GM12878 (cell line): ENCODE measurements at regions of chr11 and their contacts with region 1.

Region 1: GRCh38 chr11:131889146-131889577 is 518.7 kb downstream of the NTM start:
- DNase-seq: peak; percentile 66
- ATAC-seq: peak; percentile 82
- H3K4me3 ChIP-seq: no peak overlapping the region
- H3K27ac ChIP-seq: no peak overlapping the region
- H3K4me1 ChIP-seq: peaks cover 52% of the 10 kb centered on the region
- H3K27me3 ChIP-seq: no peaks in the 10 kb centered on the region
- CTCF ChIP-seq: no peak
- EP300 ChIP-seq: peak; percentile 21 to 77; a peak in 2 of 4 replicates
- POLR2A ChIP-seq: no peak
- RAD21 ChIP-seq: no peak

Region 2: DNA sequence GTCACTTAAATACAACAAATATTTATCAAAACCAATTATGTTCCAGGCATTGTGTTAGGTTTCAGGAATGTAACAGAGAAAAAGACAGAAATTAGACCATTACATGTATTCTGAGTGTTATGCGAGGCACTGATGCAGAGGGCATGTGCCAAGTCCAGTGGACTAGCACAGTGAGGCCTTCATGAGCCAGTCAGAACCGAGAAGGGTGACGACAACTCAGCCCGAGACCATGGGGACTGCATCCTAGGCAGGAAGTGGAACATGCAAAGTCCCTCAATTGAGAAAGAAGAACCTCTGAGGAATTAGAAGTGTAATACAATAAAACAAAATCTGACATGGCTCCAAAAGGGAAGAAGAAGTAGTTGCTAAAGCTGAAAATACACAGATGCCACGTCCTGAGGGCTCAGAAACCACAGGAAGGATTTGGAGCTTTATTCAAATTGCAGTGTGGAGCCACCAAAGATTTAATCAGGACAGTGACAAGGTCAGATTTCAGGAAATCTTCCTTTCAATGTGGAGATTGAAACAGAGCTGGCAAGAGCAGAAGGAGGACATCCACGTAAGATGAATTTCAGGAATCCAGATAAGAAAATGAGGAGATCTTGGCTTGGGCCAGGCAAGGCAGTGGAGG is 10.9 kb after region 1 on chr11:
- CTCF ChIA-PET with region 1: interaction called, 29 read pairs
- POLR2A ChIA-PET with region 1: interaction called, 5 read pairs
- RAD21 ChIA-PET with region 1: interaction called, 16 read pairs
- SMC1A ChIA-PET with region 1: interaction called, 22 read pairs
- in situ Hi-C with region 1: no loop called
- intact Hi-C with region 1: no loop called
- DNase-seq: no peak
- ATAC-seq: peak; percentile 53; the same call in 2 of the 3 replicates
- H3K4me3 ChIP-seq: no peak overlapping the region
- H3K27ac ChIP-seq: no peak overlapping the region
- H3K4me1 ChIP-seq: peaks cover 7% of the 10 kb centered on the region
- H3K27me3 ChIP-seq: no peaks in the 10 kb centered on the region
- CTCF ChIP-seq: no peak
- EP300 ChIP-seq: no peak
- POLR2A ChIP-seq: no peak
- RAD21 ChIP-seq: no peak

Region 3: DNA sequence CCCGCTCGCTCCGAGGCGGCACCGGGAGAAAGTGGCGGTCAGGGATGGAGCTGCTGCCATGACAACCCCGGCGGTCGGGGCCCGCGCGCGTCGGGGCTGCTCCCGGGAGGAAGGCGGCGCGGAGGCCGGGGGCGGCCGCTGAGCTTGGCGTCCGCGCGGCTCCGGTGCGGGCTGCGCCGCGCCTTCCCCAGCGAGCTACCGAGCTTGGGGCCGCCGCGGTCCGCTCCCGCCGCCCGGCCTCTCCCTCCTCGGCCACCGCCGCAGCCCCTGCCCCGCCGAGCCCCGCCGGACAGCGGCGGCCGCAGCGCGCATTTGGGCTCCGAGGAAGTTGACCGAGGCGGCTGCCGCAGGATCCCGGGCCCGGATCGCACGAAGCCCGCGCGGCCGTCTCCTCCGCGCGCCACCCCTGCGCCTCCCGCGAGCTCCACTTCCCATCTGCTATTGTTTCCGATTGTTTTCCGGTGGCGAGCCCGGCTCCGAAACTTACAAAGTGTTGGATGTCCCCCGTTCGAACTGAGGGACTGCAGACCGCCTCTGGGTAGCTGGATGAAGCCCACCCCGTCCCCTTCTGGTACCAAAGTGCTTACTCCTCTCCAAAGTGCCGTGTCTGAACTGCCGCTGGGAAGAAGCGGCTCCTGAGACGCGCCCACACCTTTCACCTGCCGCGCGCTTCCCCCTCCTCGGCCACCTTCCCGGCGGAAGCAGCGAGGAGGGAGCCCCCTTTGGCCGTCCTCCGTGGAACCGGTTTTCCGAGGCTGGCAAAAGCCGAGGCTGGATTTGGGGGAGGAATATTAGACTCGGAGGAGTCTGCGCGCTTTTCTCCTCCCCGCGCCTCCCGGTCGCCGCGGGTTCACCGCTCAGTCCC is 21.6 kb after region 1 on chr11:
- CTCF ChIA-PET with region 1: interaction called, 11 read pairs
- POLR2A ChIA-PET with region 1: no interaction called
- RAD21 ChIA-PET with region 1: interaction called, 6 read pairs
- SMC1A ChIA-PET with region 1: interaction called, 10 read pairs
- in situ Hi-C with region 1: no loop called
- intact Hi-C with region 1: no loop called
- DNase-seq: no peak
- ATAC-seq: no peak
- H3K4me3 ChIP-seq: no peak overlapping the region
- H3K27ac ChIP-seq: no peak overlapping the region
- H3K4me1 ChIP-seq: no peaks in the 10 kb centered on the region
- H3K27me3 ChIP-seq: peaks cover 2 to 11% of the 10 kb centered on the region in 2 experiments
- CTCF ChIP-seq: no peak
- EP300 ChIP-seq: no peak
- POLR2A ChIP-seq: no peak
- RAD21 ChIP-seq: no peak

Region 4: GRCh38 chr11:132357811-132358572 is 468.8 kb after region 1 on chr11:
- CTCF ChIA-PET with region 1: no interaction called
- POLR2A ChIA-PET with region 1: no interaction called
- RAD21 ChIA-PET with region 1: interaction called, 3 read pairs
- SMC1A ChIA-PET with region 1: interaction called, 4 read pairs
- in situ Hi-C with region 1: loop called (anchors 10 kb)
- intact Hi-C with region 1: loop called (anchors 5 kb)
- DNase-seq: peak; percentile 91
- ATAC-seq: peak; percentile 88
- H3K4me3 ChIP-seq: peak overlapping the region; percentile 51
- H3K27ac ChIP-seq: peak overlapping the region; percentile 91
- H3K4me1 ChIP-seq: peaks cover 44% of the 10 kb centered on the region
- H3K27me3 ChIP-seq: no peaks in the 10 kb centered on the region
- CTCF ChIP-seq: no peak
- EP300 ChIP-seq: peak; percentile 64 to 95
- POLR2A ChIP-seq: no peak
- RAD21 ChIP-seq: no peak